Astrocyte of the cerebellum (primary cell): ENCODE measurements at regions of chr6 and their contacts with region 1.

Region 1: DNA sequence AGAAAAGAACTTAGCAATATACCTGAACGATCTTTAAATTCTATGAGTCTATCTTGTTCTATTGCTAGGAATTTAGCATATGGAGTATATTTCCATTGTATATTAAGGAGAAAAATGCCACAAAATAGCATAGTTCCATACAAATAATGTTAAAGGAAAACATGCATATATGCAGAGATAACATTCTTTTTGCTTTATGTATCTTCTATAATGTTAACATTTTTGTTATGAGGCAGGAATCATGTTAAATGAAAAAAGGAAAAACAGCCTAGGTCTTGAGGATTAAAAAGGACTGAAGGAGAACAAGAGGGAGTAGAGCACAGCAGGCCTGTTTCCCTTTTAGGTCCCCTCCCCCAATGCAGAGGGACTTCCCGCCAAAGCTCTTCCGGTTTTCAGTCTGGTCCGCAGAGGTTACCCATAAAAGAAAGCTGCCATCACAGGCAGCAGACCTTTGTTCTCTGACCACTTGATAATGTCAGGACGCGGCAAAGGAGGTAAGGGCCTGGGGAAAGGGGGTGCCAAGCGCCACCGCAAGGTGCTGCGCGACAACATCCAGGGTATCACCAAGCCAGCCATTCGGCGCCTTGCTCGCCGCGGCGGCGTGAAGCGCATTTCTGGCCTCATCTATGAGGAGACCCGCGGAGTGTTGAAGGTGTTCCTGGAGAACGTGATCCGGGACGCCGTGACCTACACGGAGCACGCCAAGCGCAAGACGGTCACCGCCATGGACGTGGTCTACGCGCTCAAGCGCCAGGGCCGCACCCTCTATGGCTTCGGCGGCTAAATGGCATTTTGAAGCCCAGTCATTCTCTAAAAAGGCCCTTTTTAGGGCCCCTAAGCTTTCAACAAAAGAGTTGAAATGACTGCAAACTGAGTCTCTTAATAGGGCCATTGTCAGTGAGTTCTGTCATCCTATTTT is 108.4 kb upstream of the PRSS16 start:
- DNase-seq: no peak
- H3K4me3 ChIP-seq: peak overlapping the region; percentile 52
- CTCF ChIP-seq: no peak

Region 2: GRCh38 chr6:27059621-27060425 is 79.3 kb before region 1 on chr6:
- in situ Hi-C with region 1: no loop called
- DNase-seq: no peak
- H3K4me3 ChIP-seq: no peak overlapping the region
- CTCF ChIP-seq: no peak

Region 3: GRCh38 chr6:27101824-27102223 is 37.3 kb before region 1 on chr6:
- in situ Hi-C with region 1: no loop called
- DNase-seq: no peak
- H3K4me3 ChIP-seq: no peak overlapping the region
- CTCF ChIP-seq: no peak

Region 4: GRCh38 chr6:27177485-27178406 is 38.6 kb after region 1 on chr6:
- in situ Hi-C with region 1: no loop called
- DNase-seq: peak; percentile 83
- H3K4me3 ChIP-seq: peak overlapping the region; percentile 99
- CTCF ChIP-seq: peak; percentile 59

Region 5: DNA sequence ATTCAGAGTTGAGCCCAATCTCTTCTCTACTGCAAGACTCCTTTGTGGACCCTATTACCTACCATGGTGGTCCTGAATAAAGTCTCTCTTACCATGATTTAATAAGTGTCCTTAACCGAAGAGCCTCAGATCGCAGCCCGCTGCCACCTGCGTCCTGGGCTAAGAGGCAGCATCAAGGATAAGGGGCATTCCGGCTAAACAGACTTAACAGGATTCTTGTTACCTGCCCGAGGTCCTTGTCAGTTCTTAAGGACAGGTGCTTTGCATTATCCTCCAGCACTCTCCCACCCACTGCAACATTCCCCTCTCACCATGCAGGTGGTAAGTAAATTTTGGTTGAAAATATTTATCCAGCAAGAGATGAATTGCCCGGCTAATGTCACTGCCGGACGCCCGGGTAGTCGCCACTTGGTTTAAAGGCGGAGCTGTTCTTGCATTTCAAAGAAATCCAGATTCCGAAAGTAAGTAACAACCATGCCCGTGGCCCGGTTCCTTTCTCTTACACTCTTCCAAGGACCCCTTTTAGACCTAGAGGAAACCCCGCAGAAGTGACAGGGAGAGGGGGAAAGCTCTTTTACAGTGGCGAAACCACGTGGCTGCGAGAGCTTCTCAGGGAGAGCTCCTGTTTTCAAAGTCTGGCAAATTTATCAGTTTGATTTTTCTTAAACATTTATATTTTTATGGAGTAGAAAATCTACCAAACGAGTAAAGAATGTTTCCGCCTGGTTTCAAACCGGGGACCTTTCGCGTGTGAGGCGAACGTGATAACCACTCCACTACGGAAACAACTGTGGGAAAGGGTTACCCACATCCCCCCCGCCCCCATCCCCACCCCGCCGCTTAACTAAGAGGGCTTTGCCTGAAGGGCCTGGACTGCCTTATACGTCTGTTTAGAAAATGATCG is 66.5 kb after region 1 on chr6:
- in situ Hi-C with region 1: no loop called
- DNase-seq: no peak
- H3K4me3 ChIP-seq: peak overlapping the region; percentile 20
- CTCF ChIP-seq: no peak

Region 6: DNA sequence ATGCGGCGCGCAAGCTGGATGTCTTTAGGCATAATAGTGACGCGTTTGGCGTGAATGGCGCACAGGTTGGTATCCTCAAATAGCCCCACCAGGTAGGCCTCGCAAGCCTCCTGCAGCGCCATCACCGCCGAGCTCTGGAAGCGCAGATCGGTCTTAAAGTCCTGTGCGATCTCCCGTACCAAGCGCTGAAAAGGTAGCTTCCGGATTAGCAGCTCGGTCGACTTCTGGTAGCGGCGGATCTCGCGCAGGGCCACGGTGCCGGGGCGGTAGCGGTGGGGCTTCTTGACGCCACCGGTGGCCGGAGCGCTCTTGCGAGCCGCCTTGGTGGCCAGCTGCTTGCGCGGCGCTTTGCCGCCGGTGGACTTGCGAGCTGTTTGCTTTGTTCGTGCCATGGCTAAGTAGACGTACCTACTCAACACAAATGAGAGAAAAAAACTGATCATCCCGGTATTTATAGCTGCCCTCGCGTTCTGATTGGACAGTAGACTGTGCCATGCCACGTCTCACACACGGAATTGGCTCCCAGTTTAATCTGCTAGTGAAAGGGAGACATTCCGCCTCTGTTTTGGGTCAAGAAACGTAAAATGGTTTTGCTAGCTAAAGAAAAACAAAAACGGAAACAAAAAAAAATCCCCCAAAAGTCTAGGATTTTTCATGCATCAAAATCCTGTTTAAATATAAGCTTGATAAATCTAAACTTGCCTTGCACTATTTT is 733.0 kb after region 1 on chr6:
- in situ Hi-C with region 1: loop called (anchors 5 kb)
- DNase-seq: peak; percentile 97
- H3K4me3 ChIP-seq: peak overlapping the region; percentile 51
- CTCF ChIP-seq: peak; percentile 43